AG04449 (cell line): ENCODE measurements at regions of chr7 and their contacts with region 1.

Region 1: DNA sequence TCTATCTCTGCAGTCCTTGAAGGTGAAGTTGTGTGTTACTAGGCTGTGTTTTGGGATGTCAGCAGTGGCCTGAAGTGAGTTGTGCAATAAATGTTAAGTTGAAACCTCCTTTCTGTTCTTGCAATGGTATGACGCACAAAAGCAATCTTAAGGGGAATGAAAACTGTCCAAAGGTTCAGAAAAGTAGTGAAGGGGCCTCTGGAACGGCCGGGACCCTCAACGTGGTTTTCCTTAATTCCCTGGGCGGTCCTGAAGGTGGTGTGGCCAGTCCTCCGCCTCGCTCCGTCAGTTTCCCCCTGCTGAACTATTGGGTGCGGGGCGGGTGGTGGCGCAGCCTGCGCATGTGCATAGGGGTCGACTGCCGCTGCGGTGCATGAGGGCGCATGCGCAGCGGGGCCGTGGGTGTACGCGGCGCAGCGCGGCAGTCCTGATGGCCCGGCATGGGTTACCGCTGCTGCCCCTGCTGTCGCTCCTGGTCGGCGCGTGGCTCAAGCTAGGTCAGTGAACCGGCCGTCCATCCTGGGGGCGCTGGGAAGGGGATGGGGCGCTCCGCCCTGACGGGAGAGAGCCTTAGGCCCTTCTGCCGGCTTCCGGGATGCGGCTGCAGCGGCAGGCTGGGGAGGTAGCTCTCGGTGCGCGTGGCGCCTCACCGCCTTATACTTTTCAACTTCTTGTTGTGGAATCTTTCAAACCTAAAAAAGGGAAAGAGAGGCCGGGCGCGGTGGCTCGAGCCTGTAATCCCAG is at the start of gene SUMF2:
- DNase-seq: no peak
- H3K4me3 ChIP-seq: peak within 1 kb of the TSS; percentile 96
- CTCF ChIP-seq: peak; percentile 19

Region 2: GRCh38 chr7:55351263-55351662 is 712.8 kb before region 1 on chr7:
- CTCF ChIA-PET with region 1: no interaction called
- POLR2A ChIA-PET with region 1: no interaction called
- DNase-seq: no peak
- H3K4me3 ChIP-seq: no peak overlapping the region
- CTCF ChIP-seq: no peak

Region 3: DNA sequence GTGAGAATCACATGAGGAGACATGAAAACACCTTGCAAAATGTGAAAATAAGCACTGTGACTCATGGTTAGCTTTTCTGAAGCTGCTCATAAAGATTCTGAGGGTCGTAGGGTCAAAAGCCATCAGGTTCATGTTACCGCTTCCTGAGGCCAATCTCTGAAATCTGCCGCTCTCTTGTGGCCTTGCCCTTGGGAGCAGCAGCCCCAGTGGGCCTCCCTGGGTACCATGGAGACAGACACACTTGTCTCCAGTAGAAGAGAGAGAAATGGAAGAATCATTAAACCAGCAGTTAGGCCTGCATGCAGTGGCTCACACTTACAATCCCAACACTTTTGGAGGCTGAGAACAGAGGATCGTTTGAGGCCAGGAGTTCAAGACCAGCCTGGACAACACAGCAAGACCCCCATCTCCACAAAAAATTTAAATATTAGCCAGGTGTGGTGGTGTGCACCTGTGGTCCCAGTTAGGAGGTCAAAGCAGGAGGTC is 56.8 kb before region 1 on chr7:
- CTCF ChIA-PET with region 1: interaction called, 11 read pairs
- POLR2A ChIA-PET with region 1: no interaction called
- DNase-seq: no peak
- H3K4me3 ChIP-seq: no peak overlapping the region
- CTCF ChIP-seq: no peak

Region 4: DNA sequence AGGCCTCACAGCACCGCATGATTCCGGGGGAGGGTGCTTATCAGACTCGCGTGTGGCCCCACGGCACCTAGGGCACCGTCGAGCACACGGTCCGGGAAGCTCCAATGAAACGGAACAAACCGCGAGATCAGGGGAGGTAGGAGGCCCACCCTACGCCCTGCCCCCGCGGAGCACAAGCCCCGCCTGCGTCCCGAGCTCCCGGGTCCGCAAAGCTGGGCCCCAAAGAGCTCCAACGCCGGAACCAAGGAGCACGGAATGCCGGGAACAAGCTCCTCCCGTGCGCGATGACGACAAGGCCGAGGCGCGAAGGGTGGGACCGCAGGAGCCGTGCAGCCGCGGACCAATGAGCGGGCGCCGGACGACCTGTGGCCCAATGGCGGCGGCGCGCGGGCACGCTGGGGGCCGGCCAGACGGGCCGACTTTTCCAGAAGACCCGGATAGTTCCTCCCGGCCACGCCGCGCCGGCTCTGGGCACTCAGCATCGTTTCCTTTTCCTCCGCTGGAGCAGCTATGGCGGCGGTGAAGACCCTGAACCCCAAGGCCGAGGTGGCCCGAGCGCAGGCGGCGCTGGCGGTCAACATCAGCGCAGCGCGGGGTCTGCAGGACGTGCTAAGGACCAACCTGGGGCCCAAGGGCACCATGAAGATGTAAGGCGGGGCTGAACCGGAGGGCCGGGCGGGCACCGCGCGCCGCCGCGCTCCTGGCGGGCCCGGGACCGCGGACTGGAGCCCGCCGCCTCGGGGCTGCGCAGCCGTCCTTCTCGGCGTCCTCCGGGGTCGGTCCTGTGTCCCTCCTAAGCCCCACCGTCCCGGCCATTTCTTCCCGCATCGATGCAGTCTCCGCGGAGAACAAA is 12.5 kb before region 1 on chr7 and contains the starts of genes CCT6A and PSPH:
- CTCF ChIA-PET with region 1: interaction called, 4 read pairs
- POLR2A ChIA-PET with region 1: interaction called, 18 read pairs
- DNase-seq: peak; percentile 86
- H3K4me3 ChIP-seq: peak within 1 kb of the TSS; percentile 93
- CTCF ChIP-seq: no peak

Region 5: DNA sequence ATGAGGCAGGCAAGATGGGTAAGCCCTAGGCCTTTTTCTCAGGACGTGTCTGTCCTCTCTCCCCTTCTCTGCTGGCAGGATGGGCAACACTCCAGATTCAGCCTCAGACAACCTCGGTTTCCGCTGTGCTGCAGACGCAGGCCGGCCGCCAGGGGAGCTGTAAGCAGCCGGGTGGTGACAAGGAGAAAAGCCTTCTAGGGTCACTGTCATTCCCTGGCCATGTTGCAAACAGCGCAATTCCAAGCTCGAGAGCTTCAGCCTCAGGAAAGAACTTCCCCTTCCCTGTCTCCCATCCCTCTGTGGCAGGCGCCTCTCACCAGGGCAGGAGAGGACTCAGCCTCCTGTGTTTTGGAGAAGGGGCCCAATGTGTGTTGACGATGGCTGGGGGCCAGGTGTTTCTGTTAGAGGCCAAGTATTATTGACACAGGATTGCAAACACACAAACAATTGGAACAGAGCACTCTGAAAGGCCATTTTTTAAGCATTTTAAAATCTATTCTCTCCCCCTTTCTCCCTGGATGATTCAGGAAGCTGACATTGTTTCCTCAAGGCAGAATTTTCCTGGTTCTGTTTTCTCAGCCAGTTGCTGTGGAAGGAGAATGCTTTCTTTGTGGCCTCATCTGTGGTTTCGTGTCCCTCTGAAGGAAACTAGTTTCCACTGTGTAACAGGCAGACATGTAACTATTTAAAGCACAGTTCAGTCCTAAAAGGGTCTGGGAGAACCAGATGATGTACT is 15.6 kb after region 1 on chr7:
- CTCF ChIA-PET with region 1: interaction called, 31 read pairs
- POLR2A ChIA-PET with region 1: interaction called, 8 read pairs
- DNase-seq: no peak
- H3K4me3 ChIP-seq: no peak overlapping the region
- CTCF ChIP-seq: no peak

Region 6: GRCh38 chr7:56483153-56483552 is 419.1 kb after region 1 on chr7:
- CTCF ChIA-PET with region 1: no interaction called
- POLR2A ChIA-PET with region 1: no interaction called
- DNase-seq: no peak
- H3K4me3 ChIP-seq: no peak overlapping the region
- CTCF ChIP-seq: no peak